ENCODE measurements at regions of chr7 and their contacts with region 1.

Region 1: DNA sequence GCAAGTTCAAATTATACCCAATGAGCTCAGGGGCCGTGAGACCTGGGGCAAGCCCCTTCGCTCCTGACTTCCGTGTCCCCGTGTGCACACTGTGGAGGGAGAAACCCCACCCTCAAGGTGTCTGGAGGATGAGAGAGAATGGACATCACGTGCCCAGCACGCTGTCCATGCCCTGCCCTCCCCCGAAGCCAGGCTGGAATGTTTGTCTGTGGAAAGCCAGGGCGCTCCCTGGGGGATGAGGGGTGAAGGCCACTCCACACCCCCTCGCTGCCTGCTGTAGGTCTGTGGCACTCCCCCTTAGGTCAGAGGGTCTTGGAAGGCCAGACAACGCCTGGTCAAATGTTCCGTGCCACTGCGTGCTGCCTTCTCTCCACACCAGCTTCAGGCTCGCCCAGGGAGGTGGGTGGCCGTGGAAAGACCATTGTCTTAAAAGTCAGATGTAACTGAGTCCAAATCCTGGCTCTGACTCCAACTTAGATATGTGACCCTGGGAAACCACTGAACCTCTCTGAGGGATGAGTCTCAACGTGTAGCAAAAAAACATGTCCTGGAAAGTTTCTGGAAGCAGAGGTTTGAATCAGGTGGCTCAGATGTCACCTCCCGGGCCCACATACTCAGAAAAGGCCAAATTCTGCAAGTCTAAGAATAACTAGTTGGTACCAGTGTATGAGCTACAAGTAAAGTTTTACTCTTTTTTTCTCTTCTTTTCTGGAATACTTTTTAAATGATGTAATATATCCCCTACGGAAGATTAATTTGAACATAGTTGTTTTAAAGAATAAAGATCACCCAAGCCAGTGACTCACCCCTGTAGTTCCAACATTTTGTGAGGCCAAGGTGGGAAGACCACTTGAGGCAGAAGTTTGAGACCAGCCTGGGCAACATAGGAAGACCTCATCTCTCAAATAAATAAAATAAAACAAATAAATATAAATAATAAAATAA is 24.9 kb downstream of the RCC1L start:
- DNase-seq: no peak
- ATAC-seq: no peak
- H3K4me3 ChIP-seq: no peak overlapping the region
- H3K27ac ChIP-seq: no peak overlapping the region
- H3K4me1 ChIP-seq: no peaks in the 10 kb centered on the region
- H3K27me3 ChIP-seq: no peaks in the 10 kb centered on the region
- CTCF ChIP-seq: no peak

Region 2: GRCh38 chr7:74993121-74993520 is 55.6 kb before region 1 on chr7:
- CTCF ChIA-PET with region 1: no interaction called
- POLR2A ChIA-PET with region 1: no interaction called
- in situ Hi-C with region 1: no loop called
- intact Hi-C with region 1: no loop called
- DNase-seq: no peak
- ATAC-seq: no peak
- H3K4me3 ChIP-seq: no peak overlapping the region
- H3K27ac ChIP-seq: peak overlapping the region; percentile 52; the same call in 1 of the 2 replicates
- H3K4me1 ChIP-seq: peaks cover 24% of the 10 kb centered on the region
- H3K27me3 ChIP-seq: no peaks in the 10 kb centered on the region
- CTCF ChIP-seq: no peak

Region 3: DNA sequence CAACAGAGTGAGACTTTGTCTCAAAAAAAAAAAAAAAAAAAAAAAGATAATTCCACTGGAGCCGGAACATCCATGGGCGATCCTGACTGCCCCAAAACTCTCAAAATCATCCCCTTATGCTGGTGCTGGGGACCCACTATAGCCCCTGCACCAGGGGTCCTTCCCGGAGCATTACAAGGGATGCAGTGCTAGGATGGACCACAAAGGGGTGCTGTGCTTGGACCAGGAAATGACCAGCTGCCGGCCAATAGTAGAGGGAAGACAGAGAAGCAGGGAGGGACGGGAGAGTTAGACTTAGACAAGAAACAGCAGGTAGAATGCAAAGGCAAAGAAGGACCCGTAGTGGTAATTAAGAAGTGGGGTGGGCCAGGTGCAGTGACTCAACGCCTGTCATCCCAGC is 15.7 kb before region 1 on chr7:
- CTCF ChIA-PET with region 1: interaction called, 10 read pairs
- POLR2A ChIA-PET with region 1: interaction called, 8 read pairs
- in situ Hi-C with region 1: no loop called
- intact Hi-C with region 1: no loop called
- DNase-seq: no peak
- ATAC-seq: no peak
- H3K4me3 ChIP-seq: no peak overlapping the region
- H3K27ac ChIP-seq: no peak overlapping the region
- H3K4me1 ChIP-seq: no peaks in the 10 kb centered on the region
- H3K27me3 ChIP-seq: no peaks in the 10 kb centered on the region
- CTCF ChIP-seq: no peak

Region 4: DNA sequence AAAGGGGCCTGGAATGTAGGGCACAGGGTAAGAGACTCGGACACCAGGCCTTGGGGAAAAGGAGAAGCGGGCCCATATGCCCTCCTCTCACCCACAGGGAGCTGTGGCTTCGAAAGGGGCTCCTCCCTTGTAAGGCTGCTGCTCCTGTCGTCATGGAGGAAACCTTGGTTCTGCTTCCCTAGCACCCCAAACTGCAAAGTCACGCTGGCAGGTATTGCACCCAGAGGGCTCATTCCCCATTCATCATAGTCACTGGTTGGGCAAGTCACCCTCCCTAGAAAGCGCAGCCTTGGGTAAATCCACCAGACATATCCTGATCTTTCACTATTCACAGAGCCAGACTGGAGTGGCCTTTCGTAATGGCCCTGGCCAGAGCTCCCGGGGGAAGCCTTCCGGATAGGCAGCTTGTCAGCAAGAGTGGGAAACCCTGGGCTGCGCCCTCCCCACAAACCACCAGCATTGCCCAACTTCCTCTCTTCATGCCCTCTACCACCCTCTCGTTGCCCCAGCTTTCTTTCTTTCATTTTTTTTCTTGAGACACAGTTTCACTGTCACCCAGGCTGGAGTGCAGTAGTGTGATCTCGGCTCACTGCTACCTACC is 569.0 kb after region 1 on chr7:
- CTCF ChIA-PET with region 1: no interaction called
- POLR2A ChIA-PET with region 1: no interaction called
- in situ Hi-C with region 1: no loop called
- intact Hi-C with region 1: no loop called
- DNase-seq: no peak
- ATAC-seq: no peak
- H3K4me3 ChIP-seq: no peak overlapping the region
- H3K27ac ChIP-seq: no peak overlapping the region
- H3K4me1 ChIP-seq: no peaks in the 10 kb centered on the region
- H3K27me3 ChIP-seq: no peaks in the 10 kb centered on the region
- CTCF ChIP-seq: no peak